Common myeloid progenitor, CD34-positive (primary cell): ENCODE measurements at regions of chr2 and their contacts with region 1.

Region 1: GRCh38 chr2:236558993-236559978 is 10.3 kb upstream of the ACKR3 start:
- DNase-seq: no peak
- H3K4me3 ChIP-seq: peak overlapping the region in 1 of 7 experiments; percentile 11
- H3K27ac ChIP-seq: no peak overlapping the region
- H3K4me1 ChIP-seq: peaks cover 0 to 32% (median 10%) of the 10 kb centered on the region in 4 experiments
- H3K27me3 ChIP-seq: no peaks in the 10 kb centered on the region

Region 2: DNA sequence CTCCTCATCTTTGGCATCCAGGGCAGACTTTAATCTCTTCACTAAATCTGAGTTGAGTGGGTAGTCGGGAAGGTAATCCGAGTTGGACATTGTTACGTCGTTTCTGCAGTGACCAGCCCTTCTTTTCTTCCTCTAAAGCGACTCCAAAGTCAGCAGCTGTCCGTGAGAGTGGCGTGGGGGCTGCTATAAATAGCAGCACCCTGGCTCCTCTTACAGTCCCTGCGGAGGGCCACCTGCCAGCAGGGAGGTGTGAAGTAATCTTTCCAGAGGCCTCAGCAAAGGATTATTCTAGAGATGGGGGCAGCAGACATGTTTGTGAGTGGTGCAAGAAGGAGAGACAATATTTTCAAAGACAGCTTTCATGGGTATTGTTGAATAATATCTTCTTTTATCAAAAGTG is 295.0 kb before region 1 on chr2 and contains the start of gene ASB18:
- CTCF ChIA-PET with region 1: no interaction called
- POLR2A ChIA-PET with region 1: no interaction called
- DNase-seq: no peak
- H3K4me3 ChIP-seq: no peak within 1 kb of the TSS
- H3K27ac ChIP-seq: no peak within 1 kb of the TSS
- H3K4me1 ChIP-seq: no peaks in the 10 kb centered on the region
- H3K27me3 ChIP-seq: peaks cover 0 to 18% (median 0%) of the 10 kb centered on the region in 5 experiments

Region 3: GRCh38 chr2:236536727-236537398 is 22.4 kb before region 1 on chr2:
- CTCF ChIA-PET with region 1: interaction called, 11 read pairs
- POLR2A ChIA-PET with region 1: no interaction called
- DNase-seq: peak in 2 of 3 donors; percentile 59 to 73
- H3K4me3 ChIP-seq: peak overlapping the region; percentile 11 to 84 (median 69)
- H3K27ac ChIP-seq: peak overlapping the region in 1 of 2 experiments; percentile 72
- H3K4me1 ChIP-seq: peaks cover 12 to 56% (median 34%) of the 10 kb centered on the region in 4 experiments
- H3K27me3 ChIP-seq: no peaks in the 10 kb centered on the region

Region 4: DNA sequence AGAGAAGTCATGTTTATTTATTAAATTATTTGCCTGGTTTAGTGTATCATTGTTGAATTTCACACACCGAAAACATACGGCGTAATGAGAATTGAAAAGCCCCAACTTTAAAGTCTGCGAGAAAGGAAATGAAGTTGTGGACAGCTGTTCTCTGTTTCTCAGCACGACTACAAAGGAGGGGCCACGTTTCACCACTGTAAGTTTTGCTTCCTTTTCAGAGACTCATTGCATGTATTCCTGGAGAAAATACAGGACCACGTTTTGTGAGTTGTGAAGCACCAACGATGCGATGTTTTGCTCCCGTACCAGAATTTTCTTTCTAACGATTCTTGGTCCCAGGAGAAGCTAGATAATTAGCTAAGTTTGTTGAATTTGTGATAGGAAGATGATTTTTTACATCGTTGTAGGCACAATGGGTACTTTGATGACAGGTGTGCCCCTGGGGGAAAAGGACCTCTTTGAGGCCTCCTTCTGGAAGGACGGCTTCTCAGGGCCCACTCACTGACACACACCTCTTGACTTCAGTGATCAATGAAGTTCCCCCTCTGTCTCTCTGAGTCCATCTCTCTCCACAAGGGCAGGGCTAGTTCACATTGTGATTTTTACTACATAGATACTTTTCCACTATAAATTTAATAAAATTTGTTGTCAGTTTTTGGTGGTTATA is 13.3 kb before region 1 on chr2:
- CTCF ChIA-PET with region 1: interaction called, 18 read pairs
- POLR2A ChIA-PET with region 1: interaction called, 9 read pairs
- DNase-seq: peak; percentile 49 to 86 (median 77)
- H3K4me3 ChIP-seq: peak overlapping the region in 4 of 7 experiments; percentile 2 to 34 (median 18)
- H3K27ac ChIP-seq: peak overlapping the region; percentile 44 to 76
- H3K4me1 ChIP-seq: peaks cover 30 to 79% (median 63%) of the 10 kb centered on the region in 4 experiments
- H3K27me3 ChIP-seq: no peaks in the 10 kb centered on the region